Ascending aorta (tissue), 2 donors: ENCODE measurements at regions of chr18 and their contacts with region 1.

Region 1: GRCh38 chr18:59085797-59086196 is 53.9 kb upstream of the SEC11C start:
- DNase-seq: no peak
- H3K4me3 ChIP-seq: no peak overlapping the region
- H3K27ac ChIP-seq: no peak overlapping the region
- H3K4me1 ChIP-seq: no peaks in the 10 kb centered on the region
- H3K27me3 ChIP-seq: no peaks in the 10 kb centered on the region
- CTCF ChIP-seq: no peak

Region 2: DNA sequence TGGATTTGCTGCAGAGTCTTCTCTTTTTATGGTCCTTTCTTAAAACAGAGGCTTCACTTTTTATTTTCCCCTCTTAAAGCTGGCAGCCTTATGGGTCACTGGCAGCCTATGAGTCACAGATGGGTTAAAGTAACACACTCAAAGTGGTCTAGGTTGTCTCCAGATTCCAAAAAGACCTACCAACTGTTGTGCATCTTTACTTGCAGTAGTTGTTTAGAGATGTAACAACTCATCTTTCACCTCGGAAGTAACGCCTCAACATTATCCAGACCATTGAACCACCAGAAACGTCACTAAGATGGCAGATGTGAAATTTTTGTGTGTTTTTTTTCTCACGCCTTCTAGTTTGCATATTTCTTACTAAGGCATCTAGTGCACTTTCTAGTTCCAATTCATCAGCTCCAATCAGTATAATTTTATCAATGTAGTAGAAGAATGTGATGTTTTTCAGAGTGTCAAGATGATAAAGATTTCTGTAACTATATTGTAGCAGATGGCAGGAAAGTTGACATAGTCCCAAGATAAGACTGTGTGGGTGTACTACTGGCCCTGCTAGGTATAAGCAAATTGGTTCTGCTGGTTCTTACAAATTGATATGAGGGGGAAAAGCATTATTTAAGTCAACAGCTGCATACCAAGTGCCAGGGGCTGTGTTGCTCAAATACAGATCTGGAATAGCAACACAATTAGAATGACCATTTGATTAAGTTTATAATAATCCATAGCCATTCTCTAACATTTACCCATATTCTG is 44.3 kb after region 1 on chr18:
- intact Hi-C with region 1: loop called (anchors 5 kb)
- DNase-seq: no peak
- H3K4me3 ChIP-seq: no peak overlapping the region
- H3K27ac ChIP-seq: no peak overlapping the region
- H3K4me1 ChIP-seq: no peaks in the 10 kb centered on the region
- H3K27me3 ChIP-seq: no peaks in the 10 kb centered on the region
- CTCF ChIP-seq: no peak

Region 3: DNA sequence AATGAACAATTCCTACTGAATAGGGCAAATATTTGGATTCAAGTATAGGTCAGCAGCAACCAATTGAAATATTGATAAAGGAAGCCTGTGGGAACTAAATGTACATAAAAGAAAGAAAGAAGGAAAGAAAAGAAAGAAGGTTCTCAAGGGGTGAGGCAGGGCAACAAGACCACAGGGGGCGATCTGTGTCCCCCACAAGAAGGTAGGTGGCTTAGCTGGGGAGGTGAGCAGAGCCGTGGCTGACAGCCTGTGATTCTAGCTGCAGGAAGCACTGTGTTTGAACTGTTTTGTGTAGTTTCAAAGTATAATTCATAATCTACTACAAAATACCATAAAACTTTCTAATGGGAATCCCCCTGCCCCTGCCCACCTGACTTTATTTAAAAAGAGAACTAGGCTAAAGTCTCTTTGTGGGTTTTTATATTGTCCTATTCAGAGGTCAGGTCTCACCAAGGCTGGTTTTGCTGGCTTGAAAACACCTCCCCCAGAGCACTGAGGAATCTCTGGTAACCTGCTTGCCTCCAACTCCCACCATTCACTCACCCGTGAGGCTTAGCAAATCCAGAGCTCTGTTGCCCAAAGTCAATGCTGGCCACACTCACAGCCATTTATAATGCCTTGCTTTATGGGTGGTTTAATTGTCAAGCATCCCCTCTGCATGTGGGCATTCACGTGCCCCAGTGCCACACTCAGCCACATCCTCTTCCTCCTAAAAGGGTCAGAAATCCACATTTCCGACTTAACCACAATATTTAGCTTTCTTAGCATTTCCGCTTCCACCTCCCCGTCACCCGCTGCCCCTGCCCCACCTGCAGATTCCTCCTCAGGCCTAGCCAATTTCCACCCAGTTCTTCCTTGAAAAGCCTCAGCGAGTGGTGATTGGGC is 309.7 kb after region 1 on chr18:
- intact Hi-C with region 1: loop called (anchors 10 kb)
- DNase-seq: no peak
- H3K4me3 ChIP-seq: no peak overlapping the region
- H3K27ac ChIP-seq: no peak overlapping the region
- H3K4me1 ChIP-seq: no peaks in the 10 kb centered on the region
- H3K27me3 ChIP-seq: no peaks in the 10 kb centered on the region
- CTCF ChIP-seq: no peak